K562 (cell line): ENCODE measurements at regions of chr3 and their contacts with region 1.

Region 1: DNA sequence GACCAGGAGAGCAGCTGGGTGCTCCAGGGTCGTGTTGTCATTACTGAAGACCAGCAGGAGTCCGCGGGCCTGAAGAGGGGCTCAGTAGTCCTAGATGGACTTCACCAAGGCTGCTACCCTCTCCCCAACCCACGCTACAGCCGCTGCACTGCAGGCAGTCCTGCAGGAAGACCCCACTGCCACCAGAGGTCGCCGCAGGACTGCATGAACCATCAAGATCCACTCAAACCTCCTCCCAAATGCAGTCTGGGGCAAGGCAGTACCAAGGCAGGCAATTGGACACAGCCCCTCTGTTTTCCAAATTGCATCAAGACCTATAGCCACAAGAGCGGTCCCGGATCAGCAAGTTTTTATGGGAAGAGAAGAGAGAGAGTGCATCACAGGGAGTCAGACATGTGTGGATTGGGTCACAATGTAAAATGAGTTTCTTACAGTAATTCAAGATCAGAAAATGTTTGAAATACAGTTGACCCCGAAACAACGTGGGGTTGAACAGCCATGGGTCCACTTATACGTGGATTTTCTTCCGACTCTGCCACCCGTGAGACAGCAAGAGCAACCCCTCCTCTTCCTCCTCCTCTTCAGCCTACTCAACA is 46.7 kb downstream of the DZIP1L start:
- DNase-seq: peak; percentile 74 to 82 (median 80)
- ATAC-seq: peak; percentile 98
- H3K4me3 ChIP-seq: no peak overlapping the region
- H3K27ac ChIP-seq: no peak overlapping the region
- H3K4me1 ChIP-seq: no peaks in the 10 kb centered on the region
- H3K27me3 ChIP-seq: peaks cover 0 to 30% of the 10 kb centered on the region in 2 experiments; a peak in 2 of 5 replicates
- CTCF ChIP-seq: peak; percentile 86 to 91 (median 88)
- EP300 ChIP-seq: no peak
- POLR2A ChIP-seq: no peak
- RAD21 ChIP-seq: peak; percentile 93 to 94

Region 2: GRCh38 chr3:138118612-138119422 is 50.1 kb after region 1 on chr3:
- CTCF ChIA-PET with region 1: interaction called, 20 read pairs
- POLR2A ChIA-PET with region 1: no interaction called
- in situ Hi-C with region 1: no loop called
- intact Hi-C with region 1: loop called (anchors 1 kb)
- DNase-seq: peak; percentile 30 to 60 (median 42)
- ATAC-seq: peak; percentile 77
- H3K4me3 ChIP-seq: no peak overlapping the region
- H3K27ac ChIP-seq: no peak overlapping the region
- H3K4me1 ChIP-seq: peaks cover 5 to 14% of the 10 kb centered on the region in 2 experiments; a peak in 4 of 5 replicates
- H3K27me3 ChIP-seq: no peaks in the 10 kb centered on the region
- CTCF ChIP-seq: peak; percentile 63 to 76 (median 67)
- EP300 ChIP-seq: no peak
- POLR2A ChIP-seq: no peak
- RAD21 ChIP-seq: peak; percentile 71 to 81

Region 3: DNA sequence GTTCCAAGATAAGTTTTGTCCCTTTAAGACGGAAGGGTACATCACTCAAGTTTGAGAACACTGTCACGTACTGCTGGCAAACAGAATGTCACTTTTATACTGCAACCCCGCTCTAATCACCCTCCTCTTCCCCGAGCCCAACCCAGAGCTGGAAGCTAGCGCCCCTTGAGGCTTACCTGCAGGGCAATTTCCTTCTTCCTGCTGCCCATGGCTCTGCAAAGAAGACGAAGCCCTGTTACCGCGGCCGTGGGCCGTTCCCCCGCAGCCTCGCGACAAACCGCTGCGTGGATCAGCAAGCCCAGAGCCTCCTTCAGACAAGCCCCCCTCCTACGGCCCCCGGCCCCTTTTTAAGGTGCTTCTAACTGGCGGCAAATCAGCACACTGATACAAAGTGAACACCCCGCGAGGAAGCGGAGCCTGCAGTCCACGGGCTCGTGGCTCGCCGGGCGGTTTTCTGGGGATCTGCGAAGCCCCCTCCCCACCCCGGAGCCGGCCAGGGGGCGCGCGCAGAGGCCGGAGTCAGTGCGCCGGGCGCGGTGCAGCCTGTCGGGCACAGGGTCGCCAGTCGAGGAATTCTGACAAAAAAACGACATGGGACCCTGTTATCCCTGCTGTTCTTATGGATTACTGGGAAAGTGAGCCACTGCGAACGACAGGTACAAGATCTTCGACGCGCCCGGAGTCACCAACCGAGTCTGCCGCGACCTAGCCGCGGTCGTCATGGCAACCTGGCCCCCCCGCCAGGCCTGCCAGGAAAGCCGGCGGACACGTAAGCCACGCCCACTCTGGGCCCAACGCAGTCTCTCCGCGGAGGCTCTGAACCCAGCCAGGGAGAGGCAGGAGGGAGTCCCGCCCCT is 260.7 kb after region 1 on chr3 and contains the start of gene NME9:
- CTCF ChIA-PET with region 1: no interaction called
- POLR2A ChIA-PET with region 1: no interaction called
- in situ Hi-C with region 1: no loop called
- intact Hi-C with region 1: loop called (anchors 10 kb)
- DNase-seq: peak; percentile 86 to 95 (median 92)
- ATAC-seq: peak; percentile 94
- H3K4me3 ChIP-seq: peak within 1 kb of the TSS; percentile 57
- H3K27ac ChIP-seq: no peak within 1 kb of the TSS
- H3K4me1 ChIP-seq: peaks cover 7 to 10% of the 10 kb centered on the region in 2 experiments; a peak in 4 of 5 replicates
- H3K27me3 ChIP-seq: no peaks in the 10 kb centered on the region; a peak in 1 of 5 replicates
- CTCF ChIP-seq: peak; percentile 59 to 72 (median 69)
- EP300 ChIP-seq: no peak
- POLR2A ChIP-seq: no peak
- RAD21 ChIP-seq: peak in 1 of 2 experiments; percentile 47; a peak in 2 of 4 replicates
- polyA plus RNA-seq, gene NME9: 0.13 to 0.15 TPM

Region 4: GRCh38 chr3:138915503-138916498 is 847.1 kb after region 1 on chr3:
- CTCF ChIA-PET with region 1: no interaction called
- POLR2A ChIA-PET with region 1: no interaction called
- in situ Hi-C with region 1: no loop called
- intact Hi-C with region 1: loop called (anchors 5 kb)
- DNase-seq: peak; percentile 90 to 93 (median 92)
- ATAC-seq: peak; percentile 92
- H3K4me3 ChIP-seq: peak overlapping the region; percentile 79
- H3K27ac ChIP-seq: peak overlapping the region; percentile 98
- H3K4me1 ChIP-seq: peaks cover 29 to 36% of the 10 kb centered on the region in 2 experiments
- H3K27me3 ChIP-seq: no peaks in the 10 kb centered on the region
- CTCF ChIP-seq: peak; percentile 72 to 94 (median 78)
- EP300 ChIP-seq: no peak
- POLR2A ChIP-seq: peak; percentile 72
- RAD21 ChIP-seq: peak; percentile 91 to 94

Region 5: DNA sequence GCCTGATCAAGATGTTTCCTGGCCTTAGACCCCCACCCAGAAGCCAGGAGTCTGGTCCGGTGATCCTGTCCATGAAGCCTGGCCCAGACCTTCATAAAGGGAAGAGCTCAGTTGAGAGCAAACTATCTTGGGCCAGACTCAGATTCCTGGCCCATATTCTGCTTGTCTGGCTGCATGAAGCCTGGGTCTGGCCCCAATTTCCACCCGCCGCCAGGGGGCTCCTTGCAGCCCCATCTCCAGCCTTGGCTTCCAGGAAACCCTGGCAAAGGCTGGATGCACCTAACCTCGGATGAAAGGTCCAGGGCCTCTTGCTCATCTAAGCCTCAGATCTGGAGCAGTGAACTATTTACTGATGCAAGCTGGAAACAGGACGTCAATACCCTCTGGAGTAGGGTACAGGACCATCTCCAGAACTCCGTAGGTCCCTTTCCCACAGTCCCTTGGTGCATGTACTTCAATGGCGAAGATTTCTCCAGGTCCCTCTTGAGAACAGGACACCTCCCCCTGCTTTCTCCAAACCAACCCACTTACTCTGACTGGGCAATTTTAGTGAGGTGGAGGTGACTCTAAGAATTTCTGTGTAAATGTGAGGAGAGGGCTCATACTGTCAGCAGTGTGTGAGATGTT is 872.7 kb after region 1 on chr3:
- CTCF ChIA-PET with region 1: no interaction called
- POLR2A ChIA-PET with region 1: no interaction called
- in situ Hi-C with region 1: loop called (anchors 25 kb)
- intact Hi-C with region 1: loop called (anchors 10 kb)
- DNase-seq: peak; percentile 56 to 82 (median 67)
- ATAC-seq: peak; percentile 54
- H3K4me3 ChIP-seq: no peak overlapping the region
- H3K27ac ChIP-seq: no peak overlapping the region
- H3K4me1 ChIP-seq: peaks cover 14 to 66% of the 10 kb centered on the region in 2 experiments; a peak in 4 of 5 replicates
- H3K27me3 ChIP-seq: no peaks in the 10 kb centered on the region
- CTCF ChIP-seq: peak; percentile 81 to 90 (median 88)
- EP300 ChIP-seq: no peak
- POLR2A ChIP-seq: no peak
- RAD21 ChIP-seq: peak; percentile 43 to 61; a peak in 3 of 4 replicates